ENCODE measurements at regions of chr2 and their contacts with region 1.

Region 1: DNA sequence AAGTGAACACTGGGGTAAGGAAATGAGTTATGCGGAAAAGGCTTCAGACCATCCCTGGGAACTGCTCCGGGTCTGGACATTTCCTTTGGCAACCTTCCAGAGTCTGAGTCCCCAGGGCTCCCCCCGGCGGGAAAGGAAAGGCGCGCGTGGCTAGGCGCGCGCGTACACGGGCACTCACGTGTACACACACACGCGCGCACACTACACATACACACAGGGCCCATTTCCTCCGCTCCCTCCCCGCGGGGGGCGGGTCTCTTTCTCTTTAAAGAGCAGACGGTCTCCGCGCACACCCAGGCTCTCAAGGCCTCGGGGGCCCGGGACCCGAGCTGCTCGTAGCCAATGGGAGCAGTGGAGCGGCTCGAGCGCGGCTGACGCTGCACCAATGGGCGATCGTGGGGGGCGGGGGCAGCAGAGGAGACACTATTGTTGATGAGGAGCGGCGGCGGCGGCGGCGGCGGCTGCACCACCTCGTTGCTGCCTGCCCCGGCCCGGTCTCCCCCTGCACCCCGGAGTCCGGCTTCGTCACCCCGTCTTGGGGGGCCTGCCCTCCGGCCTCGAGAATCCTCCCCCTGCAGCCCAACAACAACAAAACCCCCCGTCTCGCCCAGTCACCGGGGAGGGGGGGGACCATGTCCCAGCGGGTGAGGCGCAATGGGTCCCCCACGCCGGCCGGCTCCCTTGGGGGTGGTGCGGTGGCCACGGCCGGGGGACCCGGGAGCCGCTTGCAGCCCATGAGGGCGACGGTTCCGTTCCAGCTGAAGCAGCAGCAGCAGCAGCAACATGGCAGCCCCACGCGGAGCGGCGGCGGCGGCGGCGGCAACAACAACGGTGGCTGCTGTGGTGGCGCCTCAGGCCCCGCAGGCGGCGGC is at the start of gene FAM117B:
- DNase-seq: peak; percentile 99 to 100
- H3K4me3 ChIP-seq: peak within 1 kb of the TSS; percentile 71 to 94 (median 89)
- H3K27ac ChIP-seq: peak within 1 kb of the TSS; percentile 86 to 95 (median 94)
- H3K4me1 ChIP-seq: peaks cover 4 to 14% of the 10 kb centered on the region in 2 donors
- H3K27me3 ChIP-seq: no peaks in the 10 kb centered on the region
- CTCF ChIP-seq: no peak
- POLR2A ChIP-seq: peak; percentile 60 to 93
- total RNA-seq, gene FAM117B: 6.7 to 12.4 (median 7.7) TPM

Region 2: GRCh38 chr2:202265467-202266277 is 369.1 kb before region 1 on chr2 and contains the start of gene NOP58:
- intact Hi-C with region 1: loop called (anchors 5 kb)
- DNase-seq: peak; percentile 92 to 93
- H3K4me3 ChIP-seq: peak within 1 kb of the TSS; percentile 37 to 80 (median 65)
- H3K27ac ChIP-seq: peak within 1 kb of the TSS; percentile 91 to 98 (median 95)
- H3K4me1 ChIP-seq: peaks cover 0 to 6% of the 10 kb centered on the region in 2 donors
- H3K27me3 ChIP-seq: no peaks in the 10 kb centered on the region
- CTCF ChIP-seq: no peak
- POLR2A ChIP-seq: peak; percentile 82 to 95
- total RNA-seq, gene NOP58: 68.2 to 151 (median 90.3) TPM

Region 3: DNA sequence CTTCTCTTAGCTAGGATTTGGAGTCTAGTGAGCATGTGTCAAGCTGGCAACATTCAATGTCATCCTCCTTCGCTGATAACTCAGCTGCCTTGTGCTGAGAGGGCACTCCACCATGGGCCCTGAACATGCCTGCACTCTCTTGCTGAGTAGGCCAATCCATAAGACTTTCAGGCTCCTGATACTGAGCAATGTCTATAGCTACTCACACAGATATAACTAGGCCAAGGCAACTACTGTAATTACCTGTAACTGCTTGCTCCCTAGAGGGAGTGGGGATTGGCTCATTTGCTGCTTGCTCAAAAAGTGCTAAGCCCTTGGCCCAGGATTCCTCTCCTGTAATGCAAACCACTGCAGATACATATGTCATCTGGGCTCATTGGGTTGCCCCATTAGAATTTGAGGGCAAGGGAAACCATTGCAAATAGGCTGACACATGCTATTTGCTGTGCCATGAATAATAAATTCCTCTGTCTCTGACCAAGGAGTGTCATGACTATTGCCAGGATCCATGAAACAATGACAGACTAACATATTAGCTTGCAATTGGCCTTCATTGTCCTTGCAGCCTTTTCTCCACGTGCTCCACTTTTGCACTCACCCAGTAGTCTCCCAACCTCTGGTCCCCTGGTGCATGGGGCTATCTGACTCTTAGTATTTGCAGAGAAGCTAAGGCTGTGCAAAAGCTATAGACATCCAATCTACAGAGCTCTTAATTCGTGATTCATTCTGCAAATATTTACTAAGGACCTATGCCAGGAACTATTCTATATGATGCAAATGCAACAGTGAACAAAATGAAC is 295.5 kb before region 1 on chr2:
- intact Hi-C with region 1: no loop called
- DNase-seq: no peak
- H3K4me3 ChIP-seq: no peak overlapping the region
- H3K27ac ChIP-seq: no peak overlapping the region
- H3K4me1 ChIP-seq: peaks cover 0 to 3% of the 10 kb centered on the region in 2 donors
- H3K27me3 ChIP-seq: no peaks in the 10 kb centered on the region
- CTCF ChIP-seq: no peak
- POLR2A ChIP-seq: no peak